ENCODE measurements at regions of chr20 and their contacts with region 1.

Region 1: DNA sequence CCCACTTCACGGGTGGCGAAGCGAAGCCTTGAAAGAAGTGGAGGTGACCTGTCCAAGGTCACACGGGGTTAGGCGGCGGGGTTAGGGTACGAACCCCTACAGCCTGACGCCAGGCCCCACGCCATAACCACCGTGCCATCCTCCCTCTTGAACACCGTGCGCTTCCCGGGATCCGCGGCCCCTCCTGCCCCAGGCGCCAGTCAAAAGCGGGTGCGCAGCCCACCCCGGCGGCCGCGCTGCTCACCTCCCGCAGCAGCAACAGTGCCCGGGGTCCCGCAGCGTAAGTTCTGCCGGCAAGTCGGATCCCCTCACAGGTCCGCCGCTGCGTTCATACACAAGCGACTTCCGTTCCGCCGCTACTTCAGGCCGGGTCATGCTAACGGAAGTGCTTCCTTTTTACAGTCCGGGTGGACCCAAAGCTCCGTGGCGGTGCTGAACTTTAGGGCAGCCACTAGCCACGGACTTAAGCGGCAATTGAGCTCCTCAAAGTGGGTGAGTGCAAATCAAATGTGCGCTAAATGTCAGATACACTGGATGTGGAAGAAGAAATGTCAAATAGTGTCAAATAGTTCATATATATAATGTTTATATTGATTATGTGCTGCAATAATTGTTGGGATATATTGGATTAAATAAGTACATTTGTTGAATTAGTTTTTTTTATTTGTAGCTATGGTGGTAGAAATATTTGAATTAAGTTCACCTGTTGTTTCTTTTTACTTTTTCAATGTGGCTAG is at the start of gene CDK5RAP1:
- DNase-seq: peak; percentile 96
- H3K4me3 Mint-ChIP-seq: peak within 1 kb of the TSS; percentile 99
- H3K27ac Mint-ChIP-seq: peak within 1 kb of the TSS; percentile 94
- H3K4me1 Mint-ChIP-seq: peaks cover 25% of the 10 kb centered on the region
- H3K27me3 Mint-ChIP-seq: no peaks in the 10 kb centered on the region
- total RNA-seq, gene CDK5RAP1: 49.9 and 52.9 TPM in 2 replicates

Region 2: DNA sequence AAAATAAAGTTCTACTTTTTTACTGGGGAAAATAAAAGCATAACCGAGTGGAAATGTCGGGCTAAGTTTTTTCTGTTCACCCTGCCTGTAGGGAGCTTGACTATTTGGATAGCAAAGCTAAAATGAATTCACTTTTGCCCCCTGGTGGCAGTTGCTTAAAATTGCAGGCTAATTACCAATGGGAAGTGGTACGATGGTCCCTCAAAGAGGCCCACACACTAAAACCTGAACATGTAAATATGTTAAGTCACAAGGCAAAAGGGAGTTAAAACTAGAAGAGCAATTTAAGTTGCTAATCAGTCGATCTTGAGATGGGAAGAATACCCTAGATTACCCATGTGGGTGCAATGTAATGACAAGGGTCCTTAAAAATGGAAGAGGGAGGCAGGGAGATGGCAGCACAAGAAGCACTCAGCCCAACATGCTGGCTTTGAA is 396.2 kb before region 1 on chr20:
- intact Hi-C with region 1: no loop called
- DNase-seq: peak; percentile 74
- H3K4me3 Mint-ChIP-seq: no peak overlapping the region
- H3K27ac Mint-ChIP-seq: no peak overlapping the region
- H3K4me1 Mint-ChIP-seq: peaks cover 1% of the 10 kb centered on the region
- H3K27me3 Mint-ChIP-seq: no peaks in the 10 kb centered on the region

Region 3: GRCh38 chr20:33373735-33374605 is 27.4 kb before region 1 on chr20:
- intact Hi-C with region 1: loop called (anchors 2 kb)
- DNase-seq: no peak
- H3K4me3 Mint-ChIP-seq: no peak overlapping the region
- H3K27ac Mint-ChIP-seq: peak overlapping the region; percentile 1
- H3K4me1 Mint-ChIP-seq: peaks cover 44% of the 10 kb centered on the region
- H3K27me3 Mint-ChIP-seq: no peaks in the 10 kb centered on the region

Measured in activated CD4-positive, alpha-beta T cell treated with anti-CD3 and anti-CD28 coated beads, Interleukin-2, amount 10 ng/mL, durations not matched to agents 24 days and 14 days (primary cell).